ENCODE measurements at regions of chr12 and their contacts with region 1.

Region 1: DNA sequence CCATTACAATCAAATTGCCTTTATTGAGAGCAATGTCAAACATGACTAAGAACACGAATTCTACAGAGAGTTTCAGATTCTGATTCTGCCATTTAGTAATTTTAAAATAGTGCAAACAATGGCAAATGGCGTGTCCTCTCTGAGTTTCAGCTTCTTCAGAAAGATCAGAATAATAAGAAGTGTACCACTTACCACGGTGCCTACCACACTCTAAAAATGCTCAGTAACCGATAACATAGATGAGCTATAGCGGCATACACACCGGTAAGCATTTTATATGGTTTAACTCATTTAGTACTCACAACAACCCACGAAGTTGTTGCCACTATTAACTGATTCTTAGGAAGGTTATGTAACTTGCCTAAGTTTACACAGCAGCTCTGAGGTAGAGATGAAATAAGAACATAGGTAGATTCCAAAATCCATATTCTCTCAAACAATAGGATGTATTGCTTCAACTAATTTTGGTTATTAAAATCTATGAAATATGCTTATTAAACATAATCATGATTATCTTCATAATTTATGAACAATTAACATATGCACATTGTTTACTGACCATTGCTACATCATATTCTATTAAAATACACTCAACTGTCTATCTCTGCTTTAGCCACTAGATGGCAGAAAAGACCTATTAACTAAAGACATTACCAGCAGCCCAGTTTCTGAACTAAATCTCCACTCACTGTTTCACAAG is 38.3 kb downstream of the SLC6A15 start:
- DNase-seq: peak; percentile 13
- H3K4me3 ChIP-seq: no peak overlapping the region
- H3K27ac ChIP-seq: no peak overlapping the region
- H3K27me3 ChIP-seq: no peaks in the 10 kb centered on the region
- CTCF ChIP-seq: peak; percentile 78

Region 2: DNA sequence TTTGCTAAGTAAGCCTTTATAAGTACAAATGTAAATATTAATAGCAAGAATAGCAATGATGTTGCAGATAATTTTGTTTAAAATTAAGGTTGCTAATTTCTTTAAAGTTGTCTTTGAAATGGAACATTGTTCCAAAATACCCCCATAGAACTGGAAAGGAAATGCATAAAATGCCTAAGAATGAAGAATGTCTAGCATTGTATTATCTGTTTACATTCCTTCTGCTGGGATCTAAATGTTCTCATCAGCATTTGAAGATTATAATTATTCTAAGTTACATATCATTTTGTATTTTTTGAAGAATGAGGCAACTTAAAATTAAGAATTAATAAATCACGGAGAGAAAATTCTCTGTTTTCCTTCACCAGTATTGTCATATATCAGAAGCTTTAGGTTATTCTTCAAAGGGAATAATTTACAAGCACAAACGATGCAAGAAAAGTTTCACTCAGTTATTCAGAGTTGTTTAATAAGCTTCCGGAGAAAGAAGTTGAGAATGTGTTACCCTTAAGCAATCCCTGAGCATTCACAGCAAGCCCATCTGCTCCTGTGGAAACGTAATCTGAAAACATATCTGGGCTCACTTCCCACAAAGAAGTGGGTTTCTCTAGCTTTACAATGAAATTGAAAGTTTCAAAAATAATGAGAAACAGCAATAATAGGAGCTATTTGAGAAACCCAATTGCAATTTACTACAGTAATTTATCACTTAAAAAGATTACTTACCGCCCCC is 17.0 kb after region 1 on chr12:
- CTCF ChIA-PET with region 1: interaction called, 17 read pairs
- POLR2A ChIA-PET with region 1: no interaction called
- DNase-seq: no peak
- H3K4me3 ChIP-seq: no peak overlapping the region
- H3K27ac ChIP-seq: no peak overlapping the region
- H3K27me3 ChIP-seq: no peaks in the 10 kb centered on the region
- CTCF ChIP-seq: no peak

Region 3: DNA sequence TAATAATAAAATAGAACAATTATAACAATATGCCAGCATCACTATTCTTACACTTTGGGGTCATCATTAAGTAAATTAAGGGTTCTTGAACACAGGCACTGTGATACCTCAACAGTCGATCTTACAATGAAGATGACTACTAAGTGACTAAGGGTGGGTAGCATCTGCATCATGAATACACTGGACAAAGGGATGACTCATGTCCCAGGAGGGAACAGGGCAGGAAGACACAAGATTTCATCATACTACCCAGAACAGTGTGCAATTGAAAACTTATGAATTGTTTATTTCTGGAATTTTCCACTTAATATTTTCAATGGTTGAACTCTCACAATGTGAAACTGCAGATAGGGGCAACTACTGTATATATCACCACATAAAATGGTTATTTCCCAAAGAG is 142.1 kb after region 1 on chr12:
- CTCF ChIA-PET with region 1: interaction called, 27 read pairs
- POLR2A ChIA-PET with region 1: no interaction called
- DNase-seq: peak; percentile 61
- H3K4me3 ChIP-seq: no peak overlapping the region
- H3K27ac ChIP-seq: no peak overlapping the region
- H3K27me3 ChIP-seq: no peaks in the 10 kb centered on the region
- CTCF ChIP-seq: no peak

Region 4: DNA sequence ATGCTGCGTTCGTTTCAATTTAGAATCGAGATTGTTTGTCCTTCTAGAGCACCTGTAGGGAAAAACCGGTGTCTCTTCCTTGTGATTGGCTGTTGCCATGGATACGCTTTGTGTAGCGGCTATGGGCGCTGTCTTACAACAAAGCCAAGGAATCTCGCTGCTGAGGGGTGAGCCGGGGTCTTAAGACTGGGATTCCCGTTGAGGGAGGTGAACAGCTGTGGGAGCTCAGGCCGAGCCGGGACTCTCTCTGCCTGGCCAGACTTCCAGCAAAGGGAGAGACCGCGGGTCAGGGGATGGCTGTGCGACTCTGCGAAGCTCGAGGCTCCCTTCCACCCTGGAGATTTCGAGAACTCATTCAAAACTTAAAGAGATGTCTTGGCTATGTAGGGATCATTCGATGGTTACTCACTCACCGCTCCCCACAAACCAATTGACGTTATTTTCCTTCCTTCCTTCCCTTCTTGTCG is 162.0 kb after region 1 on chr12 and contains the starts of genes LRRIQ1 and TSPAN19:
- CTCF ChIA-PET with region 1: interaction called, 497 read pairs
- POLR2A ChIA-PET with region 1: no interaction called
- DNase-seq: peak; percentile 47
- H3K4me3 ChIP-seq: peak within 1 kb of the TSS; percentile 71
- H3K27ac ChIP-seq: no peak within 1 kb of the TSS
- H3K27me3 ChIP-seq: no peaks in the 10 kb centered on the region
- CTCF ChIP-seq: no peak
- polyA plus RNA-seq, gene LRRIQ1: 0.15 and 0.58 TPM in 2 replicates
- polyA plus RNA-seq, gene TSPAN19: not detected in 2 replicates

Region 5: GRCh38 chr12:85057370-85057963 is 183.2 kb after region 1 on chr12:
- CTCF ChIA-PET with region 1: interaction called, 69 read pairs
- POLR2A ChIA-PET with region 1: no interaction called
- DNase-seq: peak; percentile 13
- H3K4me3 ChIP-seq: no peak overlapping the region
- H3K27ac ChIP-seq: no peak overlapping the region
- H3K27me3 ChIP-seq: no peaks in the 10 kb centered on the region
- CTCF ChIP-seq: peak; percentile 84